ENCODE measurements at regions of chr6 and their contacts with region 1.

Region 1: GRCh38 chr6:7188492-7188891 is 80.7 kb downstream of the RREB1 start:
- DNase-seq: no peak
- H3K4me3 Mint-ChIP-seq: no peak overlapping the region
- H3K27ac Mint-ChIP-seq: no peak overlapping the region
- H3K4me1 Mint-ChIP-seq: peaks cover 8% of the 10 kb centered on the region
- H3K27me3 Mint-ChIP-seq: no peaks in the 10 kb centered on the region

Region 2: DNA sequence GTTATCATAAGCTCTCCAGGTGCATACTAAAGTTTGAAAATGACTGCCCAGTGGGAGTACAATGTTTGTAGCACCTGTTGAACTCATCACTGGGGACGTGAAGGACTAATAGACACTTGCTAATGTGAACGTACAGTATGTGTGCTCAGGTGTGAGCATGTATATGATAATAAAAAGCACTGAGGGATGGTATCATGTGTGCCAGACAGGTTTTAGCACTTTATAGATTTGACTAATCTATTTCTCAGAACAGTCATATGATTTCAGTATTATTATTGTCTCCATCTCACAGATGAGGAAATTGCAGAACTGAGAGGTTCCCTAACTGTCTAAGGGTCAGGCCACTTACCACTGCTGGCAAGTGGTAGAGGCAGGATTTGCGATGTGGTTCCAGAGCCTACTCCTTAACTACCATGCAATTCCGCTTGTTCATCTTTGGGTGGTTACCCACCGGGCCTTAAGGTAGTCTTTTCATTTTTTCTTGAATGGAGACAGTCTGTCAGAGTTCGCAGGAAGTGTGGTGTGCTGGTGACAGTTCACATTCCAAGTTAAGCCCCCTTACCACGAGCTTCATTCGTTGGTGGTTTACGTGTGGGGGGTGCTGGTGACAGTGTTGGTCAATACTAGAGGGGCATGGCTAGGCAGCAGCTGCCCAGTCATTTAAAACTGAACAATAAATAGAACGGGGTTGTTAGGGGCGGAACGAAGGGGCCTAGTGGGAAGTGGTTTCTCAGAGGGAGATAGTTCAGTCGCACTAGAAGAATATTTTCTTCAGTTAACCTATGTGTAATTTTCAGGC is 34.0 kb before region 1 on chr6:
- intact Hi-C with region 1: loop called (anchors 5 kb)
- DNase-seq: no peak
- H3K4me3 Mint-ChIP-seq: no peak overlapping the region
- H3K27ac Mint-ChIP-seq: no peak overlapping the region
- H3K4me1 Mint-ChIP-seq: peaks cover 48% of the 10 kb centered on the region
- H3K27me3 Mint-ChIP-seq: no peaks in the 10 kb centered on the region

Region 3: GRCh38 chr6:7332090-7332745 is 143.7 kb after region 1 on chr6:
- intact Hi-C with region 1: no loop called
- DNase-seq: no peak
- H3K4me3 Mint-ChIP-seq: no peak overlapping the region
- H3K27ac Mint-ChIP-seq: no peak overlapping the region
- H3K4me1 Mint-ChIP-seq: no peaks in the 10 kb centered on the region
- H3K27me3 Mint-ChIP-seq: peaks cover 22% of the 10 kb centered on the region

Measured in activated T-helper 1 cell treated with anti-CD3 and anti-CD28 coated beads, Interleukin-12 subunit alpha, Interleukin-12 subunit beta, Interleukin-2, Interleukin-4 antibody, amounts not matched to agents 30 ng/mL and 10 ng/mL and 1 ng/mL, durations not matched to agents 14 hours and 24 hours and 36 hours (primary cell).